ENCODE measurements at regions of chr1 and their contacts with region 1.

Region 1: GRCh38 chr1:226444901-226445300 is 37.0 kb upstream of the PARP1 start:
- DNase-seq: peak; percentile 97
- H3K4me3 ChIP-seq: peak overlapping the region; percentile 42
- H3K27ac ChIP-seq: peak overlapping the region; percentile 93
- H3K4me1 ChIP-seq: peaks cover 58% of the 10 kb centered on the region
- CTCF ChIP-seq: peak; percentile 81

Region 2: GRCh38 chr1:226429858-226430715 is 14.8 kb before region 1 on chr1:
- CTCF ChIA-PET with region 1: interaction called, 16 read pairs
- POLR2A ChIA-PET with region 1: interaction called, 17 read pairs
- intact Hi-C with region 1: no loop called
- DNase-seq: no peak
- H3K4me3 ChIP-seq: no peak overlapping the region
- H3K27ac ChIP-seq: no peak overlapping the region
- H3K4me1 ChIP-seq: peaks cover 82% of the 10 kb centered on the region
- CTCF ChIP-seq: no peak

Region 3: DNA sequence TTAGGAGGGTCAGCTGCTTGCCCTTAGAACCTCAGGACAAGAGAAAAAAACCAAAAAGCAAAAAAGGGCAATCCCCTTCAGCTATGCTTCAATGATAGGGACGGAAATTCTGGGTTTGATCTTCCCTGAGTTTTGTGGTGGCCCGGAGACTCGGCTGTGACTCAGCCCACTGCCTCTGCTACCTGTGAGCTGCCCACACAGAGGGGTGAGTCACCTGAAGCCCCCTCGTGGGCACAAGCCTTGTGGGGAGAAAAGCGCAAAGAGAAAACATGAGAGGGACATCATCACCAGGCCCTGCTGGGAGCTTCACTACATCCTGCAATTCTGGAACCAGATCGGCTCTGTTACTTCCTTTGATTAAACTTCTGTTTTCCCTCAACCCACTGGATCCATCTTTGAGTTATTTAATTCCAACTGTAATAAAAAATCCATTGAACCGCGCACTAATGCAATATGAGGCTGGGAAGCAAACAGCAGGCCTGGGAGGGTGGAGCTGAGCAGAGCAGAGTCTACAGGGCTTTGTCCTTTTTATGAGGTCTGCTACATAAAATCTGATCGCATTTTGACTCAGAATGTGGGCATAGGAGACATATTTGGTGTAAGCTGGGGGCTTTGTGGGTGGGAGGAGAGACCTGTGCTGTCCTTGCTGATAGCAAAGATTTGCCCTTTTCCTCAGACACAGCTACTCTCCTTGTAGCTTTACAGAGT is 45.0 kb after region 1 on chr1:
- CTCF ChIA-PET with region 1: no interaction called
- POLR2A ChIA-PET with region 1: interaction called, 10 read pairs
- intact Hi-C with region 1: no loop called
- DNase-seq: no peak
- H3K4me3 ChIP-seq: no peak overlapping the region
- H3K27ac ChIP-seq: peak overlapping the region; percentile 33
- H3K4me1 ChIP-seq: peaks cover 52% of the 10 kb centered on the region
- CTCF ChIP-seq: no peak

Region 4: GRCh38 chr1:226547754-226548191 is 102.9 kb after region 1 on chr1:
- CTCF ChIA-PET with region 1: interaction called, 3 read pairs
- POLR2A ChIA-PET with region 1: no interaction called
- intact Hi-C with region 1: loop called (anchors 1 kb)
- DNase-seq: peak; percentile 86
- H3K4me3 ChIP-seq: no peak overlapping the region
- H3K27ac ChIP-seq: no peak overlapping the region
- H3K4me1 ChIP-seq: peaks cover 20% of the 10 kb centered on the region
- CTCF ChIP-seq: peak; percentile 96